Activated naive CD4-positive, alpha-beta T cell treated with anti-CD3 and anti-CD28 coated beads for 36 hours (primary cell): ENCODE measurements at regions of chr4 and their contacts with region 1.

Region 1: DNA sequence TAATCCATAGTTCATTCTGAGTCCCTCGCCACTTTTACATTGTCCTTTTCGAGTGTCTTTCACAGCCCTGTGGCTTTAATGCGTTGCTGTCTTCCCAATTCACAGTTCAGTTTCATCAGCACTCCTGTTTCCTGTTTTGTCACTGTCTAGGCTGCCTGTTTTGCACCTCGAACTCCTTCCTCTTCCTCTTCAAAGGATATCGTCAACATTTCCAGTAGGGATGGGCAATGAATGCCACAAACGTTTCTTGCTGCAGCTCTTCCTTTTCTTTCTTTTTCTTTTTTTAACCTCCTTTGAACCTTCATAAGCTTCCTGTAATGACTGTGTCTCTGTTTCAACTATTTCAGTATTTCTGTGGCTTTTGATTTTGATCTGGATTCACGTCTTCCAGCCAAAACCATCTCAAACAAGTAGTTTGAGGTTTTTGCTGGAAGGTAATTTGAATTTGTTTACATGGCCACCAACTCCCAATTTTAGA is 105.4 kb downstream of the ANXA3 start:
- DNase-seq: peak; percentile 45
- H3K4me3 Mint-ChIP-seq: peak overlapping the region; percentile 32
- H3K27ac Mint-ChIP-seq: peak overlapping the region; percentile 84
- H3K4me1 Mint-ChIP-seq: peaks cover 45% of the 10 kb centered on the region
- H3K27me3 Mint-ChIP-seq: no peaks in the 10 kb centered on the region

Region 2: GRCh38 chr4:78551479-78552351 is 105.3 kb before region 1 on chr4 and contains the start of gene ANXA3:
- CTCF ChIA-PET with region 1: no interaction called
- intact Hi-C with region 1: loop called (anchors 5 kb)
- DNase-seq: peak; percentile 26
- H3K4me3 Mint-ChIP-seq: peak within 1 kb of the TSS; percentile 70
- H3K27ac Mint-ChIP-seq: no peak within 1 kb of the TSS
- H3K4me1 Mint-ChIP-seq: peaks cover 8% of the 10 kb centered on the region
- H3K27me3 Mint-ChIP-seq: peaks cover 31% of the 10 kb centered on the region
- total RNA-seq, gene ANXA3: 1.2 to 3.0 TPM

Region 3: DNA sequence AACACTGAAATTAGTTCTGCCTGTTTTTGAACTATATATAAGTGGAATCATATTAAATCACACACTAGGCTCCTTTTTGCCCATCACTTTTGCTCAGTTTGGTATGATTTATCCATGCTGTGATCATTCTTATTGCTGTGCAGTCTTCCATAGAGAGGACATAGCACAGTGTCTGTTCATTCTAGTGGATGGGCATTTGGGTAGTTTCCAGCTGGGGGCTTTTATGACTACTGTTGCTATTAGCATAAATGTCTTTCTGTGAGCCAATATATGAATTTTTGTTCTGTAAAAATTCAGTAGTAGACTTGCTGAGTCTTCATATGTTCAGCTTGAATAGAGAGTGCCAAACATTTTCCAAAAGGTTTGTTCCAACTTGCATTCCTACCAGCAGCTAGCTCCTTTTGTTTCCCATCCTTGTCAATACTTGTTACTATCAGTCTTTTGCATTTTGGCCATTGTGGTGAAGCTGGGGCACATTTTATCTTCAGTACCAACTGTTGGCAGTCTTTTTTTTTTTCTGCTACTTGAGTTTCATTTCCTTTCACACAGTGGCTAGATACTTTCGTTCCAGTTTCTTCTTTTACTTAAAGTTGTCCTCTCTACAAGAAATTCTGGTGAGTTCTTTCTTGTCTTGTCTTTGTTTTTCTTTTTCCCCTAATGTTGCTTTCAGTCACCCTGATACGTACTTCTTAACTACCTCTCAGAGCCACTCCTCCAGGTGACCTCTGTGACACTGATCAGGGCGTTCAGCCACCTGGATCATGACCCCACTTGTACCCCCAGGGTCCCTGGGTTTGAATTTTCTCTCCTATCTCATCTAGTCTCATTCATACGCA is 18.5 kb before region 1 on chr4:
- CTCF ChIA-PET with region 1: interaction called, 4 read pairs
- intact Hi-C with region 1: loop called (anchors 2 kb)
- DNase-seq: no peak
- H3K4me3 Mint-ChIP-seq: no peak overlapping the region
- H3K27ac Mint-ChIP-seq: peak overlapping the region; percentile 22
- H3K4me1 Mint-ChIP-seq: peaks cover 17% of the 10 kb centered on the region
- H3K27me3 Mint-ChIP-seq: no peaks in the 10 kb centered on the region

Region 4: GRCh38 chr4:78667764-78668163 is 10.8 kb after region 1 on chr4:
- CTCF ChIA-PET with region 1: interaction called, 5 read pairs
- intact Hi-C with region 1: loop called (anchors 1 kb)
- DNase-seq: no peak
- H3K4me3 Mint-ChIP-seq: no peak overlapping the region
- H3K27ac Mint-ChIP-seq: no peak overlapping the region
- H3K4me1 Mint-ChIP-seq: peaks cover 24% of the 10 kb centered on the region
- H3K27me3 Mint-ChIP-seq: no peaks in the 10 kb centered on the region